Activated naive CD4-positive, alpha-beta T cell treated with anti-CD3 and anti-CD28 coated beads for 36 hours (primary cell): ENCODE measurements at regions of chr10 and their contacts with region 1.

Region 1: GRCh38 chr10:50885097-50885859 is at the start of gene A1CF:
- DNase-seq: no peak
- H3K4me3 Mint-ChIP-seq: no peak within 1 kb of the TSS
- H3K27ac Mint-ChIP-seq: no peak within 1 kb of the TSS
- H3K4me1 Mint-ChIP-seq: no peaks in the 10 kb centered on the region
- H3K27me3 Mint-ChIP-seq: peaks cover 8% of the 10 kb centered on the region
- total RNA-seq, gene A1CF: not detected

Region 2: GRCh38 chr10:50021646-50022045 is 863.6 kb before region 1 on chr10:
- CTCF ChIA-PET with region 1: no interaction called
- intact Hi-C with region 1: no loop called
- DNase-seq: no peak
- H3K4me3 Mint-ChIP-seq: no peak overlapping the region
- H3K27ac Mint-ChIP-seq: no peak overlapping the region
- H3K4me1 Mint-ChIP-seq: no peaks in the 10 kb centered on the region
- H3K27me3 Mint-ChIP-seq: peaks cover 15% of the 10 kb centered on the region

Region 3: GRCh38 chr10:50552771-50553535 is 332.3 kb before region 1 on chr10:
- CTCF ChIA-PET with region 1: no interaction called
- intact Hi-C with region 1: loop called (anchors 10 kb)
- DNase-seq: peak; percentile 31
- H3K4me3 Mint-ChIP-seq: no peak overlapping the region
- H3K27ac Mint-ChIP-seq: no peak overlapping the region
- H3K4me1 Mint-ChIP-seq: peaks cover 28% of the 10 kb centered on the region
- H3K27me3 Mint-ChIP-seq: no peaks in the 10 kb centered on the region

Region 4: GRCh38 chr10:50788951-50789945 is 96.0 kb before region 1 on chr10:
- CTCF ChIA-PET with region 1: no interaction called
- intact Hi-C with region 1: no loop called
- DNase-seq: no peak
- H3K4me3 Mint-ChIP-seq: no peak overlapping the region
- H3K27ac Mint-ChIP-seq: no peak overlapping the region
- H3K4me1 Mint-ChIP-seq: no peaks in the 10 kb centered on the region
- H3K27me3 Mint-ChIP-seq: peaks cover 4% of the 10 kb centered on the region

Region 5: GRCh38 chr10:51001587-51001986 is 116.3 kb after region 1 on chr10:
- CTCF ChIA-PET with region 1: no interaction called
- intact Hi-C with region 1: no loop called
- DNase-seq: no peak
- H3K4me3 Mint-ChIP-seq: no peak overlapping the region
- H3K27ac Mint-ChIP-seq: no peak overlapping the region
- H3K4me1 Mint-ChIP-seq: no peaks in the 10 kb centered on the region
- H3K27me3 Mint-ChIP-seq: peaks cover 4% of the 10 kb centered on the region

Region 6: DNA sequence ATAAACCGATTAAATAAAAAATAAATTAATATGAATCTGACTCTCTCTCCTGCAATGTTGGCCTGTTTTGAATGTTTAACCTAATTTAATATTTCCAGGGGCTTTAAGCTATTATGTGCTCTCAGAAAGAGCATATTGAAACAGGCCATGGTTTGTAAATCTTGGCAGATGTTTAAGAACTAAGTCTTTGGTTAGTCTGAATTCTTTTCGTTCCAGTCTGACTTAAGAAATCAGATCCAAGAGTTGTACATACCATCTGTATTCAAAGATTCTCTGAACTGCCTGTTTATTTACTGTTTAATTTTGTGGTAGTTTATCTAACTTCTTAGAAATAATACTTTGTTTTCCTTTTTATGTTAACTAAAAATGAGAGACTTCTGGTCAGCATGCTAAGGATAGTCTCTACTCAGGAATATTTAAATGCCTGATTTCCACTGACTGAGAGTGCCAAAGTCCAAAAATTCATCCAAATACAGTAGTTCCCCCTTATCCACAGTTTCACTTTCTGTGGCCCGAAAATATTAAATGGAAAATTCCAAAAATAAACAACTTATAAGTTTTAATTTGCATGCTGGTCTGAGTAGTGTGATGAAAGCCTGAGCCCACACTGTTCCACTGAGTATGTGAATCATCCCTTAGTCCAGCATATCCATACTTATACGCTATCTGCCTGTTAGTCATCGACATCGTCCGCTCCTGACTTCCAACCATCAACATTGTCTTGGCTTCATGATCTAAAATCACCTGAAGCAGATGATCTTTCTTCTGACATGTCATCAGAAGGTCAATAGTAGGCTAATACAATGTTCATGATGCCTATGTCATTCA is 1052.2 kb after region 1 on chr10:
- CTCF ChIA-PET with region 1: no interaction called
- intact Hi-C with region 1: no loop called
- DNase-seq: no peak
- H3K4me3 Mint-ChIP-seq: no peak overlapping the region
- H3K27ac Mint-ChIP-seq: no peak overlapping the region
- H3K4me1 Mint-ChIP-seq: no peaks in the 10 kb centered on the region
- H3K27me3 Mint-ChIP-seq: peaks cover 9% of the 10 kb centered on the region